ENCODE measurements at regions of chr1 and their contacts with region 1.

Region 1: GRCh38 chr1:229325853-229326502 is 16.9 kb downstream of the CCSAP start:
- DNase-seq: no peak
- H3K4me3 Mint-ChIP-seq: no peak overlapping the region
- H3K27ac Mint-ChIP-seq: no peak overlapping the region
- H3K4me1 Mint-ChIP-seq: no peaks in the 10 kb centered on the region
- H3K27me3 Mint-ChIP-seq: no peaks in the 10 kb centered on the region
- CTCF ChIP-seq: no peak

Region 2: GRCh38 chr1:228964178-228965089 is 361.5 kb before region 1 on chr1:
- CTCF ChIA-PET with region 1: no interaction called
- POLR2A ChIA-PET with region 1: no interaction called
- intact Hi-C with region 1: loop called (anchors 5 kb)
- DNase-seq: no peak
- H3K4me3 Mint-ChIP-seq: no peak overlapping the region
- H3K27ac Mint-ChIP-seq: peak overlapping the region; percentile 95
- H3K4me1 Mint-ChIP-seq: peaks cover 18% of the 10 kb centered on the region
- H3K27me3 Mint-ChIP-seq: no peaks in the 10 kb centered on the region
- CTCF ChIP-seq: no peak